Psoas muscle (tissue), 8 donors: ENCODE measurements at regions of chr9 and their contacts with region 1.

Region 1: GRCh38 chr9:127283917-127284316 is 19.3 kb downstream of the GARNL3 start:
- DNase-seq: peak; percentile 28 to 59
- ATAC-seq: peak in 2 of 4 donors; percentile 79 to 80
- H3K4me3 ChIP-seq: no peak overlapping the region
- H3K27ac ChIP-seq: no peak overlapping the region
- H3K4me1 ChIP-seq: no peaks in the 10 kb centered on the region
- H3K27me3 ChIP-seq: no peaks in the 10 kb centered on the region
- CTCF ChIP-seq: peak; percentile 41

Region 2: GRCh38 chr9:127221695-127222094 is 62.2 kb before region 1 on chr9:
- intact Hi-C with region 1: no loop called
- DNase-seq: no peak
- ATAC-seq: no peak
- H3K4me3 ChIP-seq: no peak overlapping the region
- H3K27ac ChIP-seq: no peak overlapping the region
- H3K4me1 ChIP-seq: no peaks in the 10 kb centered on the region
- H3K27me3 ChIP-seq: no peaks in the 10 kb centered on the region
- CTCF ChIP-seq: no peak

Region 3: GRCh38 chr9:127233550-127233949 is 50.4 kb before region 1 on chr9:
- intact Hi-C with region 1: no loop called
- DNase-seq: no peak
- ATAC-seq: no peak
- H3K4me3 ChIP-seq: no peak overlapping the region
- H3K27ac ChIP-seq: no peak overlapping the region
- H3K4me1 ChIP-seq: no peaks in the 10 kb centered on the region
- H3K27me3 ChIP-seq: no peaks in the 10 kb centered on the region
- CTCF ChIP-seq: no peak

Region 4: GRCh38 chr9:127347831-127348779 is 64.2 kb after region 1 on chr9:
- intact Hi-C with region 1: loop called in 1 of 2 experiments (anchors 10 kb)
- DNase-seq: no peak
- ATAC-seq: peak in 3 of 4 donors; percentile 50 to 60 (median 54)
- H3K4me3 ChIP-seq: no peak overlapping the region
- H3K27ac ChIP-seq: peak overlapping the region; percentile 78
- H3K4me1 ChIP-seq: peaks cover 10% of the 10 kb centered on the region
- H3K27me3 ChIP-seq: no peaks in the 10 kb centered on the region
- CTCF ChIP-seq: peak; percentile 28

Region 5: GRCh38 chr9:127360829-127361228 is 76.9 kb after region 1 on chr9:
- intact Hi-C with region 1: loop called in 1 of 2 experiments (anchors 5 kb)
- DNase-seq: no peak
- ATAC-seq: peak in 2 of 4 donors; percentile 38 to 58
- H3K4me3 ChIP-seq: no peak overlapping the region
- H3K27ac ChIP-seq: peak overlapping the region; percentile 0
- H3K4me1 ChIP-seq: peaks cover 8% of the 10 kb centered on the region
- H3K27me3 ChIP-seq: no peaks in the 10 kb centered on the region
- CTCF ChIP-seq: no peak

Region 6: GRCh38 chr9:127396808-127397497 is 113.0 kb after region 1 on chr9 and contains the start of gene SLC2A8:
- intact Hi-C with region 1: loop called (anchors 10 kb)
- DNase-seq: peak; percentile 98 to 99
- ATAC-seq: peak; percentile 94 to 97 (median 96)
- H3K4me3 ChIP-seq: peak within 1 kb of the TSS; percentile 94
- H3K27ac ChIP-seq: peak within 1 kb of the TSS; percentile 89
- H3K4me1 ChIP-seq: peaks cover 13% of the 10 kb centered on the region
- H3K27me3 ChIP-seq: no peaks in the 10 kb centered on the region
- CTCF ChIP-seq: peak; percentile 29
- total RNA-seq, gene SLC2A8: 15.8 to 18.7 (median 16.3) TPM